Posterior cingulate gyrus (tissue), 11 donors: ENCODE measurements at regions of chr19 and their contacts with region 1.

Region 1: GRCh38 chr19:12495002-12495802 is 10.6 kb upstream of the ZNF709 start:
- DNase-seq: peak; percentile 87 to 99 (median 97)

Region 2: DNA sequence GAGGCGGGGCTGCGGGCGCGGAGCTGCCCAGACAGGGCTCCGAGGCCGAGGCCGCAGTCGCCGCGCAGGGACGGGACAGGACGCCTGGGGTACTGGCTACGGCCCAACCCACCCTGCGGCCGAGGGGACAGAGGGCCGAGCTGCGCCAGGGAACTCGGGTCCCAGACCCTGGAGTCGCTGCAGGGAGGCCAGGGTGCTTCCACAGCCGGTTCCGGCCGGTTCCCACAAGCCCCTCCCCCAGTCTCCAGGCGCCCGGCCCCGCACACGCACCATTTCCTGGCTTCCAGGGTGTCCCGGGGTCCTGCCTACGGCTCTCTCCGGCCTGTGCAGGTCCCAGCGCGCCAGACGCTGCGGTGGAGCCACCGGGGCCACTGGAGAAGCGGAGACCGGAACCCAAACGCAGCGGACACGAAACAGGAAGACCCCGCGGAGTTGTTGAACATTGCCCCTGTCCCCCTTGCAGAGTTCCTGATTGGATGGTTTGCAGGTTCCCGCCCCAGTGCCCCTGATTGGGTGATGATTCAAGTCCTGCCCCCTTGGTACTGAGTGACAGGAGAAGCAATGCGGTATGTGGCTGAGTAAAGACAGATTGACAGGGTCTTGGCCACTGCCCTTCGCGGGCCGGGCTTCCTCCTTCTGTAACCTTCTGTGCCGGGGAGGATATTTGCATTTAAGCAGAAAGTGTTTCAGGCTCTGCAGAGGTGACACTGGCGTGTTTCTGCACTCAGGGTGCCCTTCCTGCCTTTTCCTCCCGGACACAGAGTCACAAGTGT is 56.0 kb after region 1 on chr19 and contains the start of gene ZNF564:
- intact Hi-C with region 1: loop called (anchors 2 kb)
- DNase-seq: peak; percentile 94 to 100 (median 96)

Region 3: DNA sequence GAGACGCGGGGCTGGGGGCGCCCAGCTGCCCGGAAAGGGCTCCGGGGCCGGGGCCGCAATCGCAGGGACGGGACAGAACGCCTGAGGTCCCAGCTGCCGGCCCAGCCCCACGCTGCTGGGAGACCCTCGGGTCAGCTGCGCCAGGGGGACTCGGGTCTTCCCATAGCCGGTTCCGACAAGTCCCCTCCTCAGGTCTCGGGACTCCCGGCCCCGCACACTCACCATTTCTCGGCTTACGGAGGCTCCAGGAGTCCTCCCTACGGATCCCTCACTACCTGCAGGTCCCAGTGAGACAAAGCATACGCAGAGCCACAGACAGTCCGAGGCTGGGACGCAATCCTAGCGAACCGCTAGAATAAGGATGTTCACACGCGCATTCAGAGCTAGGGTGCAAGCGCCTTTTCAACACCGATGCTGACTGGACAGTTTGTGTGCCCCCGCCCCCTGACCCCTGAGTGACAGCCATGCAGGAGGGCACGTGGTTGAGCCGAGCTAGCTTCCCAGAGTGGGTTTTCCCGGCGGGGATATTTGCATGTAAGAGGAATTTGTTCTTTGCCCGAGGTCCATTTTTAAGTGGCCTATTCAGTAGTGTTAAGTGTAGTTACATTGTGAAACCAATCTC is 101.8 kb after region 1 on chr19:
- intact Hi-C with region 1: no loop called
- DNase-seq: peak in 2 of 10 donors; percentile 10

Region 4: GRCh38 chr19:12628040-12629022 is 133.1 kb after region 1 on chr19:
- intact Hi-C with region 1: no loop called
- DNase-seq: no peak